PC-9 (cell line): ENCODE measurements at regions of chr13 and their contacts with region 1.

Region 1: GRCh38 chr13:98672944-98673545 is 79.4 kb downstream of the SLC15A1 start:
- DNase-seq: peak; percentile 82 to 90
- H3K4me3 ChIP-seq: no peak overlapping the region
- H3K27ac ChIP-seq: no peak overlapping the region
- H3K4me1 ChIP-seq: peaks cover 14% of the 10 kb centered on the region
- H3K27me3 ChIP-seq: no peaks in the 10 kb centered on the region
- CTCF ChIP-seq: peak; percentile 95

Region 2: DNA sequence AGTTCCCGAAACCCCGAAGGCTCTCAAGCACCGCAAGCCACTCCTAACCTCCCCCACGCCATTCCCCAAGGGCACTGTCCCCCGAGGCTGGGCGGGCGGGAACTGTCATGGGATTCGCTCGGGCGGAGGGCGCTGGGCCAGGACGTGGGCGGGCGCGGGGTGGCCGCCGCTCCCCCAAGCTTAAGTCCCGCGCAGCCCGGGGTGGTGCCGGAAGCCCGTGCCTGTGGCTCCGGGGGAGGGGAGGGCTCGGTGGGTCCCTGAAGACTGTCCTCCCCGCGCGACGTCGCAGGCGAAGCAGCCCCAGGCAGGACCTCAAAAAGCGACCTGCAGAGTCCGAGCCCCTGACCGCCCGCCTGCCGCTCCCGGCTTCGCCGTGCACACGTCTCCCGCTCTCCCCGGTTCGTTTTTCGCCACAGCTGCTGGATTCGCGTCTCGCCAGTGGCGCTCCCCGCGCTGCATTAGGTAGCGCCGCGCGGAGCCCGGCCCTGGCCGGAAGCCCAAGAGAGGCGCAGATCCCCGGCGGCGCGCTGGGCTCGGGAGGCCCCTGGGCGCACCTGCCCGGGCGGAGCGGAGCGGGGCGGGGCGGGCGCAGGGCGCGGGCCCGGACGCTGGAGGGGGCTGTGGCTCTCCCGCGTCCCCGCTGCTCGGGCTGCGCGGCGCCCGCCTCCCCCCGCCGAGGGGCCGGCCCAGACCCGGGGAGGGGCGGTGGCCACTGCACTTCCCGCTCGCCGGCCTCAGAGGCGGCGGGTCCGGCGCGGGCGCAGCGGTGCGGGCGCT is 530.5 kb before region 1 on chr13 and contains the start of gene FARP1:
- CTCF ChIA-PET with region 1: no interaction called
- POLR2A ChIA-PET with region 1: no interaction called
- intact Hi-C with region 1: loop called (anchors 5 kb)
- DNase-seq: peak; percentile 65 to 91
- H3K4me3 ChIP-seq: peak within 1 kb of the TSS; percentile 80
- H3K27ac ChIP-seq: no peak within 1 kb of the TSS
- H3K4me1 ChIP-seq: peaks cover 20% of the 10 kb centered on the region
- H3K27me3 ChIP-seq: no peaks in the 10 kb centered on the region
- CTCF ChIP-seq: no peak
- total RNA-seq, gene FARP1: 40.1 and 62.1 TPM in 2 replicates

Region 3: GRCh38 chr13:98576963-98577822 is 95.9 kb before region 1 on chr13 and contains the start of gene STK24:
- CTCF ChIA-PET with region 1: no interaction called
- POLR2A ChIA-PET with region 1: no interaction called
- intact Hi-C with region 1: loop called (anchors 1 kb)
- DNase-seq: peak; percentile 45 to 80
- H3K4me3 ChIP-seq: peak within 1 kb of the TSS; percentile 98
- H3K27ac ChIP-seq: peak within 1 kb of the TSS; percentile 93
- H3K4me1 ChIP-seq: peaks cover 49% of the 10 kb centered on the region
- H3K27me3 ChIP-seq: no peaks in the 10 kb centered on the region
- CTCF ChIP-seq: no peak
- total RNA-seq, gene STK24: 134 and 139 TPM in 2 replicates

Region 4: DNA sequence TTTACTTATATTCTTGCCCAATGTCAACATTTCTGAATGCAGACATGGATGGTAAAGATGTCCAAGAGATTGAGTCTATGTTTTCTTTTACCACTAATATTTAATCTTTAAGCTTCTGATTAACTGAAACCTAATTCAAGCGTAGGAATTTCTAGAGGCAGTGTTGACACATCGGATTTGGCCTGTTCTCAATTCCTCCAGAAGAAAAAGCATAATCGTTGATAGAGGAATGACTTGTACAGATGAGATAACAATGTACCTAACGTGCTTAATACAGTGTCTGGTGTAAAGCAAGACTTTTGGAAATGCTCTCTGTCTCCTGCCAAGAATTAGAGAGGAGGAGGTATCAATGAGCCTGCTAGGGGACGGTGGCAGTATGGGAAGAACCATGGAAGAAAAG is 44.2 kb after region 1 on chr13:
- CTCF ChIA-PET with region 1: no interaction called
- POLR2A ChIA-PET with region 1: no interaction called
- intact Hi-C with region 1: no loop called
- DNase-seq: peak in 1 of 2 experiments; percentile 28
- H3K4me3 ChIP-seq: no peak overlapping the region
- H3K27ac ChIP-seq: no peak overlapping the region
- H3K4me1 ChIP-seq: peaks cover 8% of the 10 kb centered on the region
- H3K27me3 ChIP-seq: no peaks in the 10 kb centered on the region
- CTCF ChIP-seq: no peak

Region 5: DNA sequence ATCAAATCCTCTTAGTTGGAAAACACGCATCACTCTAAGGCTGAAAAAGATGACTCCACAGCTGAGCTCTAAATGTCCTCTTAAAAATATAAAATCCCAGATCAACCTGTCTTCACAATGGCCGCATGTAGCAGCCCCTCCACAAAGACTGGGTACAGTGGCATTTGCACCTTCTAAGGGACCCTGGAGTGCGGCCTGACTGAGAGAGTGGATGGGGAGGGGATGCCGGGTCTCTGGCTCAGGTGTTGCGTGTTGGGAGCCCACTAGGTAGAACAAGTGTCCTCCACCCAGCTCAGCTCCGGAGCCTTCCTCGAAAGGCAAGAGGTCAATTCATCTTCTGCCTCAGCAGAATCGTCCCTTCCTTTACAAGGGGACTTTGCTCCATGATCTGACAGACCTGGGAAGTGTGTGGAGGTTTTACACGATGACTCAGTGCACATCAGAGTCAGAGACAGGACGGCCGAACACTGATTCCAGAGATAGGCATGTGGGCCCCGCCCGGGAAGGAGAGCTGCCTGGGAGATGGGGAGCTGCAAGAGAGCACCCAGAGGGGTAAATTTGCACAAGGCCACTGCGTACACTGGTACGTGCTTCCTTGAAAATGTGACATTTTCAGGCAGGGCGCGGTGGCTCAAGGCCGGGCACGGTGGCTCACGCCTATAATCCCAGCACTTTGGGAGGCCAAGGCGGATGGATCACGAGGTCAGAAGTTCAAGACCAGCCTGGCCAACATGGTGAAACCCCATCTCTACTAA is 103.0 kb after region 1 on chr13:
- CTCF ChIA-PET with region 1: no interaction called
- POLR2A ChIA-PET with region 1: no interaction called
- intact Hi-C with region 1: loop called (anchors 5 kb)
- DNase-seq: peak; percentile 87 to 99
- H3K4me3 ChIP-seq: no peak overlapping the region
- H3K27ac ChIP-seq: peak overlapping the region; percentile 54
- H3K4me1 ChIP-seq: peaks cover 11% of the 10 kb centered on the region
- H3K27me3 ChIP-seq: no peaks in the 10 kb centered on the region
- CTCF ChIP-seq: no peak

Region 6: GRCh38 chr13:99033814-99034213 is 360.8 kb after region 1 on chr13:
- CTCF ChIA-PET with region 1: no interaction called
- POLR2A ChIA-PET with region 1: interaction called, 3 read pairs
- intact Hi-C with region 1: loop called (anchors 10 kb)
- DNase-seq: no peak
- H3K4me3 ChIP-seq: no peak overlapping the region
- H3K27ac ChIP-seq: no peak overlapping the region
- H3K4me1 ChIP-seq: peaks cover 26% of the 10 kb centered on the region
- H3K27me3 ChIP-seq: no peaks in the 10 kb centered on the region
- CTCF ChIP-seq: peak; percentile 74

Region 7: DNA sequence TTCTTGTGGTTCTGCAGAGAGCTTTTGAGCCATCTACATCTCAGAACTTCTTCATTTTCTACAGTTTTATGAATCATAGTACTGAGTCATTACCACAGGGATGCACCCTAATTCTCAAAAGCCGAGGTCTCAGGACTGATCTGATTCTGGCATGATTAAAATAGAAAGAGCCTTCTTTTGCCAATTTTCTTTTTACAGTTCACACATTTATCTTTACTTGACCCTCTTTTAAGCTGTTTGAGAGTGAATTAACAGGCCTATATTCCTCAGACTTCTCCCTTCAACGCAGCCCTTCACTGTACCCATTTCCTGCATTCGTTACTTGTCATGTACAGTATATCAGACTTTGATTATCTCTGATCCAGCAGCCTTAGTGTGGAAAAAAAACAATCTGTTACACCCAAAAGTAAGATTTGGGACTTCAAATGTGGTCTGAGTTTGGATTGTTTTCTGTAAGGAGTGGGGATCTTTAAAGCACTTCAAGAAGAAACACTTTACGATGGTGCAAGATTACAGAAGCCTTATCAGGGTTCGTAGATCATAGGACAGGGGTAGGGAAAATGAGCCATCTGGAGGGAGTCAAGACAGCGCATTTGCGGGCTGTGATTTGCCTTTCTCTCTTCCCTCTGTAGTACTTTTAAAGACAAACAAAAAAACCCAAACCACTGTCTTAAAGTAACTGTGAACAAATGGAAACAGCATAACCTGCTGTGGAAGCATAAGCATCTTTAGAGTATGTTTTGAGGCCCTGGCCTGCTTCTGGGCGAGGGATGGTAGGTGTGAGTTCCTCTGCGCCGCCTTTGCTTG is 649.5 kb after region 1 on chr13:
- CTCF ChIA-PET with region 1: no interaction called
- POLR2A ChIA-PET with region 1: no interaction called
- intact Hi-C with region 1: no loop called
- DNase-seq: peak in 1 of 2 experiments; percentile 46
- H3K4me3 ChIP-seq: no peak overlapping the region
- H3K27ac ChIP-seq: no peak overlapping the region
- H3K4me1 ChIP-seq: peaks cover 26% of the 10 kb centered on the region
- H3K27me3 ChIP-seq: no peaks in the 10 kb centered on the region
- CTCF ChIP-seq: no peak